IMR-90 (cell line): ENCODE measurements at regions of chr7 and their contacts with region 1.

Region 1: GRCh38 chr7:2670720-2671391 is 17.1 kb upstream of the AMZ1 start:
- DNase-seq: peak; percentile 51
- ATAC-seq: peak; percentile 84
- H3K4me3 ChIP-seq: no peak overlapping the region
- H3K27ac ChIP-seq: no peak overlapping the region
- H3K4me1 ChIP-seq: peaks cover 6% of the 10 kb centered on the region
- H3K27me3 ChIP-seq: no peaks in the 10 kb centered on the region
- CTCF ChIP-seq: peak; percentile 82
- POLR2A ChIP-seq: no peak; the same call in 1 of the 2 replicates
- RAD21 ChIP-seq: peak; percentile 84

Region 2: GRCh38 chr7:2477447-2478398 is 193.1 kb before region 1 on chr7:
- CTCF ChIA-PET with region 1: no interaction called
- POLR2A ChIA-PET with region 1: no interaction called
- dilution Hi-C with region 1: no loop called
- in situ Hi-C with region 1: no loop called
- intact Hi-C with region 1: no loop called
- DNase-seq: peak; percentile 49
- ATAC-seq: peak; percentile 99
- H3K4me3 ChIP-seq: no peak overlapping the region
- H3K27ac ChIP-seq: no peak overlapping the region
- H3K4me1 ChIP-seq: no peaks in the 10 kb centered on the region
- H3K27me3 ChIP-seq: peaks cover 13% of the 10 kb centered on the region; the same call in 1 of the 2 replicates
- CTCF ChIP-seq: peak; percentile 85
- POLR2A ChIP-seq: no peak
- RAD21 ChIP-seq: peak; percentile 89

Region 3: DNA sequence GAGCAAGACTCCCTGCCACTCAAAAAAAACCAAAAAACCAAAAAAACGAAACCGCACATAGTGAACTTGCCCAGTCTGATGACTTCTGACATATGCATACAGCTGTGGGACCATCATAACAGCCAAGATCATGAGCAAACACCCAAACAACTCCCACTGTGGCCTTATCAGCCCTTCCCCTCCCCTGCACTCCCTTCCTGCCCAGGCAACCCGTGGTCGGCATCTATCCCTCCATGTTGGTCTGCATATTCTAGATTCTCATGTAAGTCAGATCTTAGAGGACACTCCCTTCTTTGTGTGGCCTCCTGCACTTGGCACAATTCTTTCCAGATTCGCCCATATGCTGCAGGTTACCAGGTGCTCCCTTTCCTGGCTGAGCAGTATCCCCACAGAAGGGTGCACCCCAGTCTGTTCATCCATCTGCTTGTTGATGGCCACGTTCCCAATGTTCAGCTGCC is 100.4 kb after region 1 on chr7:
- CTCF ChIA-PET with region 1: no interaction called
- POLR2A ChIA-PET with region 1: interaction called, 14 read pairs
- dilution Hi-C with region 1: no loop called
- in situ Hi-C with region 1: no loop called
- intact Hi-C with region 1: no loop called
- DNase-seq: no peak
- ATAC-seq: no peak
- H3K4me3 ChIP-seq: no peak overlapping the region
- H3K27ac ChIP-seq: no peak overlapping the region
- H3K4me1 ChIP-seq: no peaks in the 10 kb centered on the region; the same call in none of the 2 replicates
- H3K27me3 ChIP-seq: no peaks in the 10 kb centered on the region
- CTCF ChIP-seq: no peak
- POLR2A ChIP-seq: no peak
- RAD21 ChIP-seq: no peak